CD8-positive, alpha-beta T cell (primary cell): ENCODE measurements at regions of chr1 and their contacts with region 1.

Region 1: GRCh38 chr1:19661721-19662228 is 2.9 kb upstream of the HTR6 start:
- DNase-seq: peak in 7 of 9 experiments; percentile 24 to 74 (median 53)
- ATAC-seq: peak; percentile 19
- H3K4me3 ChIP-seq: no peak overlapping the region
- H3K4me3 Mint-ChIP-seq: no peak overlapping the region
- H3K27ac ChIP-seq: no peak overlapping the region
- H3K27ac Mint-ChIP-seq: no peak overlapping the region
- H3K4me1 ChIP-seq: peaks cover 19% of the 10 kb centered on the region
- H3K4me1 Mint-ChIP-seq: peaks cover 30% of the 10 kb centered on the region
- H3K27me3 ChIP-seq: peaks cover 8 to 11% of the 10 kb centered on the region in 2 experiments
- H3K27me3 Mint-ChIP-seq: peaks cover 22% of the 10 kb centered on the region
- CTCF ChIP-seq: peak; percentile 82

Region 2: DNA sequence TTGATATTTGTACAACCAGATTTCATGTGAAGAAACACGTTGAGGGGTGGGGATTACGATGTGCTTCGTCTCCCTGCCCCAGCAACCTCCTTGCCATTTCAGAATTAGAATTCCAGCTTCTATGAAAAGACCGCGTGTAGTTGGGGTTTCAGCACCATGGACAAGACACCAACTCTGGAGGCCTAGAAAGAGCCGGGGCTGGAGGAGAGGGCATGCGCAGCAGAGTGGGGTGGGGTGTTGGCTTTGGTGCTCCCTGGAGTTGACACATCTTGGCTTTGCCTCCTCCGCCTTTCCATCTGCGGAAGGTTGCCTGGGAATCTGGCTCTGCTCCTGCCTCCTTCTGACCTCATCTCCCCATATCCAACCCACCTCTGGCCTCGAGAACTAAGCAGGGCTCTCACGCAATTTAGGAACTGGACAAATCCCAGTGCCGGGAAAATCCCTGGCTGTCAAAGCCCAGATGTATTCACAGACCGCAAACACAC is 14.7 kb after region 1 on chr1:
- CTCF ChIA-PET with region 1: interaction called, 36 read pairs
- POLR2A ChIA-PET with region 1: no interaction called
- intact Hi-C with region 1: no loop called
- DNase-seq: peak in 3 of 9 experiments; percentile 18 to 42 (median 41)
- ATAC-seq: peak; percentile 52
- H3K4me3 ChIP-seq: no peak overlapping the region
- H3K4me3 Mint-ChIP-seq: no peak overlapping the region
- H3K27ac ChIP-seq: no peak overlapping the region
- H3K27ac Mint-ChIP-seq: no peak overlapping the region
- H3K4me1 ChIP-seq: no peaks in the 10 kb centered on the region
- H3K4me1 Mint-ChIP-seq: peaks cover 2% of the 10 kb centered on the region
- H3K27me3 ChIP-seq: no peaks in the 10 kb centered on the region
- H3K27me3 Mint-ChIP-seq: peaks cover 9% of the 10 kb centered on the region
- CTCF ChIP-seq: no peak

Region 3: DNA sequence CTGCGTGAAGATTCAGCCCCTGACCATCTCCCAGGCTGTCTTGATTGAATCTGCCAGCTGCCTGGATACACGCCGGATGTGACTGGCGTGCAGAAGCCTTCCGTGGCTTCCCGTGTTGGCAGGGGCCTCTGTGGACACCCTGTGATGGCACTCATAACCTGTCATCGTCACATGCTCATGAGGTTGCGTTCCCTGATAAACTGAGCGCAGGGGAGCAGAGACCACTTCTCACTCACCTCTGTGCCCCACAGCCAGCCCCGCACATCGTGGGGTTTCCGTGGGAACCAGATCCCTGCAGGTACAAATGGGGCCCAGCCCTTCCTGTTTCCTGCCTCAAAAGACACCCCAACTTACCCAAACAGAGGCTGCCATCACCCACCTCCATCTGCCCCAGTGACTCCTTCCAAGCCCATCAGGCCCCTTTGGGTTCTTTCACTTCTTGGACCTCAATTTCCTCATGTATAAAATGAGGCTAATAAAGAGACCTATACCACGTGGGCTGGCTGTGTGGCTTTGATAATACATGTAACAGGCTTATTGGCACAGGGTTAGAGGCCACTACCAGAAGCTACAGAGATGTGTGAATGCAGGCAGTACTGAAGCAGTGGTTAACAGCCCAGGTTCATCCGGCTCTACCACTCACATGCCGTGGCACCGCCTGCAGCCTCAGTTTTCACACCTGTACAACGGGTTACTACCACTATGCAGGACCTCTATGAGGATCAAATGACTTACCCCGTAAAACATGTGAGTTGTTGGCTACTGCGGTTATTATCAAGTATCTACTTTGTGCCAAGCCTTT is 26.5 kb after region 1 on chr1:
- CTCF ChIA-PET with region 1: interaction called, 28 read pairs
- POLR2A ChIA-PET with region 1: interaction called, 6 read pairs
- intact Hi-C with region 1: no loop called
- DNase-seq: peak; percentile 21 to 83 (median 53)
- ATAC-seq: peak; percentile 80
- H3K4me3 ChIP-seq: no peak overlapping the region
- H3K4me3 Mint-ChIP-seq: peak overlapping the region; percentile 66
- H3K27ac ChIP-seq: peak overlapping the region; percentile 43 to 78
- H3K27ac Mint-ChIP-seq: peak overlapping the region; percentile 95
- H3K4me1 ChIP-seq: peaks cover 35% of the 10 kb centered on the region
- H3K4me1 Mint-ChIP-seq: peaks cover 47% of the 10 kb centered on the region
- H3K27me3 ChIP-seq: no peaks in the 10 kb centered on the region
- H3K27me3 Mint-ChIP-seq: no peaks in the 10 kb centered on the region
- CTCF ChIP-seq: no peak

Region 4: DNA sequence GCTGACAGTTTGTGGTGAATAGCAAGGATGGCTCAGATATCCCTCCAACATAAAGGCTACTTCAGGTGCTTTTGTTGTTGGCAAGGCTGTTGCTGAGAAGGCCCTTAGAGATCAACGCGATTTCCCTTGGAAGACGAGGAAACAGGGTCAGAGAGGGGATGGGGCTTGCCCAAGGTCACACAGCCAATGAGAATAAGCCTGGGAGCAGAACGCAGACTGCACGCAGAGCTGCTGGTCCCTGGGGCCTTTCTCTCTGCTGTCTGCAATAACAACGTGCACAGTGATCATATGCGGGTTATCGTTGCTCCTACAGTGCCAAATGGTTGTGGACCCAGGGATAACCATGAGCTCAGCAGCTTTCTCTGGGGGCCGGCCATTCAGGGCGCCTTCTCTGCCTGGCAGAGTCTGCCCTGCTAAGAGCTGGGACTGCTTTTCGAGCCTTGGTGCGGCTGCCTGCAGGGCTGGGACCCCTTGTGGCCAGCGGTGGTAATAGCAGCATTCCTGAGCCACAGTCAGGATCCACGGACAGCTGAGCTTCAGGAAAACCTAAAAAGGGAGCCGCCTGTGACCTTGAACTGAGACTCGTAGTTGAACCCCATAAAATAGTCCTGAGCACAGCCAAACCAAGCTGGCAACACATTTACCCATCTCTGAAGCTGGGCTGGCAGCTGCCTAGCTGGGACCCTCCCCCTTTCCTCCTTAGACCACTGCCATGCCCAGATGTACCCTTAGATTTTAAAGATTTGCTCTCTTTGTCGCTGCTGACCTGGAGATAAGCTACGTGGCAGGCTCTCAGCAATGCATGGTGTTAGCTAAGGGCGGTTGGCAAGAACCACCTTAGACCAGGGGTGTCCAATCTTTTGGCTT is 42.7 kb after region 1 on chr1:
- CTCF ChIA-PET with region 1: interaction called, 364 read pairs
- POLR2A ChIA-PET with region 1: interaction called, 13 read pairs
- intact Hi-C with region 1: loop called in 1 of 2 experiments (anchors 1 kb)
- DNase-seq: peak; percentile 33 to 72 (median 63)
- ATAC-seq: peak; percentile 94
- H3K4me3 ChIP-seq: no peak overlapping the region
- H3K4me3 Mint-ChIP-seq: no peak overlapping the region
- H3K27ac ChIP-seq: no peak overlapping the region
- H3K27ac Mint-ChIP-seq: no peak overlapping the region
- H3K4me1 ChIP-seq: peaks cover 4% of the 10 kb centered on the region
- H3K4me1 Mint-ChIP-seq: peaks cover 9% of the 10 kb centered on the region
- H3K27me3 ChIP-seq: no peaks in the 10 kb centered on the region
- H3K27me3 Mint-ChIP-seq: no peaks in the 10 kb centered on the region
- CTCF ChIP-seq: peak; percentile 86

Region 5: GRCh38 chr1:19793360-19794046 is 131.7 kb after region 1 on chr1:
- CTCF ChIA-PET with region 1: no interaction called
- POLR2A ChIA-PET with region 1: no interaction called
- intact Hi-C with region 1: no loop called
- DNase-seq: peak in 1 of 9 experiments; percentile 10
- ATAC-seq: no peak
- H3K4me3 ChIP-seq: no peak overlapping the region
- H3K4me3 Mint-ChIP-seq: no peak overlapping the region
- H3K27ac ChIP-seq: no peak overlapping the region
- H3K27ac Mint-ChIP-seq: peak overlapping the region; percentile 49
- H3K4me1 ChIP-seq: no peaks in the 10 kb centered on the region
- H3K4me1 Mint-ChIP-seq: peaks cover 29% of the 10 kb centered on the region
- H3K27me3 ChIP-seq: no peaks in the 10 kb centered on the region
- H3K27me3 Mint-ChIP-seq: no peaks in the 10 kb centered on the region
- CTCF ChIP-seq: no peak

Region 6: DNA sequence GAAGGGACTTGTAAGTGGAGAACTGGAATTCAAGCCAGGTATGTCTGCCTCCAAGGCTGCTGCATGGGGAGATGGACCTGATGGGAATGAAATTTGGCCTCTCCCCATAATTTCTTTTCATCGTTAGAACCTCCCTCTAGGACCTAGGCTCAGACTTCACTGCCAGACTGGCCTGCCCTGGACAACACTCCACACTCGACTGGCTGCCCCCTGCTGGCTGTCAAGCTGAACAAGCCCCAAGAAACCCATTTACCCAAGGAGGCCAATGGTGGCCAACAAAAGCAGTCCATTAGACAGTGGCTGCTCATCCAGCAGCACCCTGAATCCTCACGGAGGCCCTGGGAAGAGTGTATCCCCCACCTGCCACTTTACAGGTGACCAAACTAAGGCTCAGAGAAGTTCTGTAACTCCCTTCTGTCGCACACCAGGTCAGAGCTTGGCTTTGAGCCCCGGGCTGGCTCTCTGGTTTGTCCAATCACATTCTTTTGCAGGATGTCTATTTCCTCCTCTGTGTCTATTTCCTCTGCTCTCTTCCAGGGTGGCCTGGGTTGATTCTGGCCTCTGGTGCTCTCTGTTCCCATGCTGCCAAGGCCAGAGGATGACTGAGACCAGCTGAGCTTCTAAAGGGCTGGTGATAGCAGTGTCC is 149.6 kb after region 1 on chr1:
- CTCF ChIA-PET with region 1: interaction called, 4 read pairs
- POLR2A ChIA-PET with region 1: no interaction called
- intact Hi-C with region 1: loop called in 1 of 2 experiments (anchors 1 kb)
- DNase-seq: peak in 7 of 9 experiments; percentile 13 to 56 (median 32)
- ATAC-seq: no peak
- H3K4me3 ChIP-seq: no peak overlapping the region
- H3K4me3 Mint-ChIP-seq: no peak overlapping the region
- H3K27ac ChIP-seq: no peak overlapping the region
- H3K27ac Mint-ChIP-seq: no peak overlapping the region
- H3K4me1 ChIP-seq: no peaks in the 10 kb centered on the region
- H3K4me1 Mint-ChIP-seq: no peaks in the 10 kb centered on the region
- H3K27me3 ChIP-seq: no peaks in the 10 kb centered on the region
- H3K27me3 Mint-ChIP-seq: no peaks in the 10 kb centered on the region
- CTCF ChIP-seq: no peak